Sigmoid colon (tissue), 7 donors: ENCODE measurements at regions of chr17 and their contacts with region 1.

Region 1: DNA sequence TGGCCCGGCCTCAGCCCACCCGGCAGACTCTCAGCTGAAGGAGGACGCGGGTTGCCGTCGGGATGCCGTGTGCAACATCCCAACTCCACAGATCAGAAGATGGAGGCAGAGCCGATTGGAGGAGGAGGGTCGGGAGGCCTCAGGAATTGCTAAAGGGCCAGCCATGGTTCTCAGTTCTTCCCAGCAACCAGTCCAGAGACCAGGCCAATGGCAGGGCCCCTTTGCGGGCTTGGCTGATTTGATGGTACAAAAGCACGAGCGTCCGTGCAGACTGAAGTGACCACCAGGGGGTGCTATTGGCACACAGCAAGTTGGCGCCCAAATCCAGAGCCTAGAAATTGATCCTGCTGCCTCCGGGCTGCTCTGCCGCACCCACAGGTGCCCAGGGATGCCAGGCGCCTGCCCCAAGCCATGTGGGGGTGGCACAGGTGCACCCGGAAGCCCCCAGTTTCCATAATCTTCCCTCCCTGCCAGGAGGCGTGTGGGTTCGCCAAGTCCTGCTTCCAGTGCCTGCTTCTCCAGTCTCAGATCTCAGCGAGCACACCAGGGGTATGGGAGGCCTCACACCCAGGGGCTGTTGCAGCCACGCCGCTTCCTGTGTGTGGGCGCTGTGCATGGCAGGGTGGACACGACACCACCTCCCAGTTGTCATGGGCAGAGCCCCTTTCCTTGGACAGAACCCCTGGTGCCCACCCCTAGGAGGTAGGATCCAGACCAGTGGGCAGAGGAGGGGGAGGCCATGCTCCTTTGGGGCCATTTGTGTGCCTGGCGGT is 7.1 kb upstream of the TEX19 start:
- DNase-seq: peak; percentile 92
- H3K4me3 ChIP-seq: no peak overlapping the region
- H3K27ac ChIP-seq: no peak overlapping the region
- H3K4me1 ChIP-seq: peaks cover 0 to 19% (median 10%) of the 10 kb centered on the region in 4 donors
- H3K27me3 ChIP-seq: peaks cover 0 to 19% (median 0%) of the 10 kb centered on the region in 3 donors
- CTCF ChIP-seq: peak; percentile 78 to 94 (median 90)
- EP300 ChIP-seq: no peak
- POLR2A ChIP-seq: no peak

Region 2: DNA sequence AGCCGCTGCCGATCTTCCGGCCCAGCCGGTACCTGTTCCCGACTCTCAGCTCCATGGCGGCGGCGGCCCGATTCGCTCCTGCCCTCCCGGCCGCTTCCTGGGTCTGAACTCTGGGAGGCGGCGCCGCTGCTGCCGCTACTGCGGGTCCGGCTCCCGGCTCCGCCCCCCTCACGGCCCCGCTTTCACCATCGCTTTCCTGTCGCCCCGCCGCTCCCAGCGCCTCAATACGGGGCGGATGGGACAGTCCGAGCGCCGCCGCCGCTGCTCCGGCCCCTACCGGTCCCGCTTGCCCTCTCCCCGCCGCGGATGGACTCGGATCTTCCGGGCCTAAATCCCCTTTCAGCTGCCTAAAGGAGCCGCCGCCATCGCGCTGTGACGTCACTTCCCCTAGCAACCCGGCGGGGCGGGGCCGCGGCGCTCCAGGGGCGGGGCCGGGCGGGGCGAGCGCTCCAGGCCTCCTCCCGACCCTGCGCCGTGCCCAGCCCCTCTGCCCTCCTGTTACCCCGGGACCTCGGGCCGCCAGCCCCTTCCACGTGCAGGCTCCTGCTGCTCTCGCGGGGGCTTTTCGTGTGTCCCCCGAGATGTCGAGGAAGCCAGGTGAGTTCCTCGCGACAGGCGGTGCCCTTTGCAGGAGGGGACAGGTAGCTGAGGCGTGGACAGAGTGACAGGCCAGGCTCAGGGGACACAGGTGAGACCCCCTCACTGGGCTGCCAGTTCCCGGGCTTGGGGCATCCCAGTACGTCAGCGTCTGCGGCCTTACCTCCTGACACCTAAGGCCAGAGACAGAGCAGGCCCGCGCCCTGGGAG is 78.4 kb before region 1 on chr17 and contains the start of gene CSNK1D:
- intact Hi-C with region 1: no loop called
- DNase-seq: peak; percentile 95
- H3K4me3 ChIP-seq: peak within 1 kb of the TSS; percentile 77 to 99 (median 93)
- H3K27ac ChIP-seq: peak within 1 kb of the TSS; percentile 97 to 100 (median 98)
- H3K4me1 ChIP-seq: peaks cover 0 to 57% (median 55%) of the 10 kb centered on the region in 4 donors
- H3K27me3 ChIP-seq: no peaks in the 10 kb centered on the region
- CTCF ChIP-seq: no peak
- EP300 ChIP-seq: peak in 2 of 4 donors; percentile 53 to 72
- POLR2A ChIP-seq: peak; percentile 88 to 91
- total RNA-seq, gene CSNK1D: 45.1 to 61.2 (median 48.9) TPM

Region 3: DNA sequence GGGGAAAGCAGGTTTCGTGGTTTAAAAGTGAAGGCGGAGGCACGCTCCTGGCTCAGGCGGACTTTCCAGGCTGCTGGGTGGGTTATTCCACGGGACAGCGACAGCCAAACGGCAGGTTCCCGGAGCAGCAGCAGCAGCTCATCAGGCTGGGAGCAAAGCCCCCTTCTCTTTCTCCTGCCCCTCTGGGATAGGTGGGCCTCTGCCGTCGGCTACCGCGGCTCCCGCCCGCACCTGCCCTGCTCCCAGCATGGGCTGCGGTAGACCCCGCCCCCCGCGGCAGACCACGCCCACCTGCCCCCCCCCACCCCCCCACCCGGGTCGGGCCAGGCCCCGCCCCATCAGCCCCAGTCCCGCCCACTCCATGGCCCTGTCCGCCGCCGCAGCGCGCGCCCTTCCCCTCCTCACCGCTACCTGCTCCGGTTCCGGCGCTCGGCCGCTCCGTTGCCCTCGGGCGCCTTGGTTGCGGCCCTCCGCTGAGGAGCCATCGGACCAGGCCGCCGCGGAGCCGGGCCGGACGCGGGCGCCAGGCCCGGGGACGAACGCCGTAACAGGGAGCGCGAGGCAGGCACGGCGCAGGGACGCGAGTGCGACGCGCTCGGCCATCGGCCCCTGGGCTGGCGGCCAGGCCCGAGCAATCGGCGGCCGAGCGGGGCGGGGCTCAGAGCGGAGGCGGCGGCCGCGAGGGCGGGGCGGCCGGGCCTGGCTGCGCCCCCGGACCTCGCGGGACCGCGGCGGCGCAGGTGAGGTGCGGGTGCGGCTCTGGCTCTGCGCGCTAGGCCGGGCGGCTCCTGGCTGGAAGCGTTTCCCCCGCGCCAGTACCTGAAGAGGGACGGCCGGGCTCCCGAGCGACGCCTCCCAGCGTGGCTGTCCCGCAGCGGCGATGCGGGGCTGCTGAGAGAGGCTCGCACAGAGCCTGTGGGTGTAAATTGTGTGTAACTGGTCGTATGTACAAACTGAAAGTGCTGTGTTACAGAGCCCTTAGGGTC is 66.4 kb after region 1 on chr17 and contains the starts of genes HEXD and OGFOD3:
- intact Hi-C with region 1: loop called (anchors 2 kb)
- DNase-seq: peak; percentile 86
- H3K4me3 ChIP-seq: peak within 1 kb of the TSS; percentile 55 to 77 (median 74)
- H3K27ac ChIP-seq: peak within 1 kb of the TSS; percentile 86 to 94 (median 89)
- H3K4me1 ChIP-seq: peaks cover 0 to 26% (median 12%) of the 10 kb centered on the region in 4 donors
- H3K27me3 ChIP-seq: no peaks in the 10 kb centered on the region
- CTCF ChIP-seq: no peak
- EP300 ChIP-seq: no peak
- POLR2A ChIP-seq: no peak
- total RNA-seq, gene HEXD: 15.8 to 42.9 (median 24.0) TPM
- total RNA-seq, gene OGFOD3: 14.1 to 28.2 (median 22.1) TPM

Region 4: GRCh38 chr17:82494236-82495055 is 142.5 kb after region 1 on chr17:
- intact Hi-C with region 1: loop called (anchors 5 kb)
- DNase-seq: peak; percentile 94
- H3K4me3 ChIP-seq: no peak overlapping the region
- H3K27ac ChIP-seq: peak overlapping the region; percentile 60 to 97 (median 94)
- H3K4me1 ChIP-seq: peaks cover 0 to 41% (median 29%) of the 10 kb centered on the region in 4 donors
- H3K27me3 ChIP-seq: no peaks in the 10 kb centered on the region
- CTCF ChIP-seq: peak; percentile 76 to 95 (median 88)
- EP300 ChIP-seq: no peak
- POLR2A ChIP-seq: no peak

Region 5: GRCh38 chr17:82536512-82537201 is 184.8 kb after region 1 on chr17:
- intact Hi-C with region 1: no loop called
- DNase-seq: peak; percentile 77
- H3K4me3 ChIP-seq: peak overlapping the region in 2 of 4 donors; percentile 14 to 16
- H3K27ac ChIP-seq: peak overlapping the region; percentile 81 to 97 (median 92)
- H3K4me1 ChIP-seq: peaks cover 0 to 95% (median 88%) of the 10 kb centered on the region in 4 donors
- H3K27me3 ChIP-seq: no peaks in the 10 kb centered on the region
- CTCF ChIP-seq: no peak
- EP300 ChIP-seq: no peak
- POLR2A ChIP-seq: no peak

Region 6: GRCh38 chr17:82551779-82552457 is 200.0 kb after region 1 on chr17:
- intact Hi-C with region 1: loop called (anchors 5 kb)
- DNase-seq: peak; percentile 91
- H3K4me3 ChIP-seq: no peak overlapping the region
- H3K27ac ChIP-seq: peak overlapping the region; percentile 47 to 88 (median 83)
- H3K4me1 ChIP-seq: peaks cover 0 to 87% (median 75%) of the 10 kb centered on the region in 4 donors
- H3K27me3 ChIP-seq: no peaks in the 10 kb centered on the region
- CTCF ChIP-seq: peak; percentile 71 to 76 (median 76)
- EP300 ChIP-seq: no peak
- POLR2A ChIP-seq: no peak

Region 7: GRCh38 chr17:82636626-82637598 is 285.0 kb after region 1 on chr17:
- intact Hi-C with region 1: loop called (anchors 10 kb)
- DNase-seq: no peak
- H3K4me3 ChIP-seq: no peak overlapping the region
- H3K27ac ChIP-seq: no peak overlapping the region
- H3K4me1 ChIP-seq: peaks cover 0 to 15% (median 0%) of the 10 kb centered on the region in 4 donors
- H3K27me3 ChIP-seq: no peaks in the 10 kb centered on the region
- CTCF ChIP-seq: no peak
- EP300 ChIP-seq: no peak
- POLR2A ChIP-seq: no peak

Region 8: GRCh38 chr17:82769041-82769440 is 417.1 kb after region 1 on chr17:
- intact Hi-C with region 1: loop called (anchors 2 kb)
- DNase-seq: no peak
- H3K4me3 ChIP-seq: no peak overlapping the region
- H3K27ac ChIP-seq: no peak overlapping the region
- H3K4me1 ChIP-seq: peaks cover 0 to 7% (median 0%) of the 10 kb centered on the region in 4 donors
- H3K27me3 ChIP-seq: no peaks in the 10 kb centered on the region
- CTCF ChIP-seq: no peak
- EP300 ChIP-seq: no peak
- POLR2A ChIP-seq: no peak

Region 9: DNA sequence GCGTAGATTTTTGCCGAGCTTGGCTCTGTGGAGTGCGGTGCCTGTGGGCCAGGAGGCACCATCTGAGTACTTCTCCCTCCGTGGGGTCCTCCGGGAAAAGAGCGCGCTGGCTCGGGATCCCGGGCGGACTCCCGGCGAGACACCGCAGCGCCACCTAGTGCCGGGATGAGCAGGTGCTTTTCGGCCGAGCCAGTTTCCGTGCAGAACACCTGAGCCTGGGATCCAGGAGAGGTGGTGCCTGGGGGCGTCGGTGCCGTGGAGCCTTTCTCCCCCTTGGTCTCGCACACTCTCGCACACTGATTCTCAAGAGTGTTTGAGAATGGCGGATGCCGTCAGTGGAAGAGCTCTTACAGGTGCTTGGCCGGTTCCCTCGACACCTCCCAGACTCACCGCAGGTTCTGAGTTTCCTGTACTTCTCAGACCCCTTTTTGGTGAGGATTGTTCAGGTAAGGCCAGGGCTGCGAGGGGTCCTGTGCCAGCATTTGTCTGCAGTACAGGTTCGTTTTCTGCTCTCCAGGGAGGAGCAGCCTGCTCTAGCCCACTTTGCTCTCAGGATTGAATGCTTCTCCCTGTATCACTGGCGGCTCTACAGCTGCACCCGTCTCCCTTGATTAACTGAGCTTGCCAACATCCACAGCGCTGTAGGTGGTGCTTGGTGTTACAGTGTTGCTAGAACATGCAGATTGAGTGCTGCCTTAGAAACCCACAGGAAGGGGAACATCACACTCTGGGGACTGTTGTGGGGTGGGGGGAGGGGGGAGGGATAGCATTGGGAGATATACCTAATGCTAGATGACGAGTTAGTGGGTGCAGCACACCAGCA is 423.3 kb after region 1 on chr17:
- intact Hi-C with region 1: loop called (anchors 2 kb)
- DNase-seq: peak; percentile 81
- H3K4me3 ChIP-seq: peak overlapping the region in 1 of 4 donors; percentile 9
- H3K27ac ChIP-seq: no peak overlapping the region
- H3K4me1 ChIP-seq: peaks cover 0 to 7% (median 2%) of the 10 kb centered on the region in 4 donors
- H3K27me3 ChIP-seq: no peaks in the 10 kb centered on the region
- CTCF ChIP-seq: peak; percentile 61 to 90 (median 80)
- EP300 ChIP-seq: no peak
- POLR2A ChIP-seq: no peak